ENCODE measurements at regions of chr1 and their contacts with region 1.

Region 1: GRCh38 chr1:8423650-8424538 is 106.0 kb downstream of the SLC45A1 start:
- DNase-seq: peak in 8 of 9 experiments; percentile 32 to 74 (median 57)
- ATAC-seq: peak; percentile 56
- H3K4me3 ChIP-seq: peak overlapping the region; percentile 62 to 75
- H3K4me3 Mint-ChIP-seq: peak overlapping the region; percentile 92
- H3K27ac ChIP-seq: peak overlapping the region; percentile 49 to 61
- H3K27ac Mint-ChIP-seq: peak overlapping the region; percentile 97
- H3K4me1 ChIP-seq: peaks cover 79% of the 10 kb centered on the region
- H3K4me1 Mint-ChIP-seq: peaks cover 44% of the 10 kb centered on the region
- H3K27me3 ChIP-seq: no peaks in the 10 kb centered on the region
- H3K27me3 Mint-ChIP-seq: no peaks in the 10 kb centered on the region
- CTCF ChIP-seq: no peak

Region 2: GRCh38 chr1:8238851-8239305 is 185.0 kb before region 1 on chr1:
- CTCF ChIA-PET with region 1: no interaction called
- POLR2A ChIA-PET with region 1: no interaction called
- intact Hi-C with region 1: no loop called
- DNase-seq: no peak
- ATAC-seq: no peak
- H3K4me3 ChIP-seq: no peak overlapping the region
- H3K4me3 Mint-ChIP-seq: no peak overlapping the region
- H3K27ac ChIP-seq: no peak overlapping the region
- H3K27ac Mint-ChIP-seq: no peak overlapping the region
- H3K4me1 ChIP-seq: peaks cover 3% of the 10 kb centered on the region
- H3K4me1 Mint-ChIP-seq: peaks cover 4% of the 10 kb centered on the region
- H3K27me3 ChIP-seq: no peaks in the 10 kb centered on the region
- H3K27me3 Mint-ChIP-seq: peaks cover 17% of the 10 kb centered on the region
- CTCF ChIP-seq: no peak

Region 3: GRCh38 chr1:8334106-8334851 is 89.6 kb before region 1 on chr1:
- CTCF ChIA-PET with region 1: no interaction called
- POLR2A ChIA-PET with region 1: no interaction called
- intact Hi-C with region 1: no loop called
- DNase-seq: no peak
- ATAC-seq: no peak
- H3K4me3 ChIP-seq: no peak overlapping the region
- H3K4me3 Mint-ChIP-seq: no peak overlapping the region
- H3K27ac ChIP-seq: no peak overlapping the region
- H3K27ac Mint-ChIP-seq: no peak overlapping the region
- H3K4me1 ChIP-seq: no peaks in the 10 kb centered on the region
- H3K4me1 Mint-ChIP-seq: no peaks in the 10 kb centered on the region
- H3K27me3 ChIP-seq: no peaks in the 10 kb centered on the region
- H3K27me3 Mint-ChIP-seq: no peaks in the 10 kb centered on the region
- CTCF ChIP-seq: no peak

Region 4: DNA sequence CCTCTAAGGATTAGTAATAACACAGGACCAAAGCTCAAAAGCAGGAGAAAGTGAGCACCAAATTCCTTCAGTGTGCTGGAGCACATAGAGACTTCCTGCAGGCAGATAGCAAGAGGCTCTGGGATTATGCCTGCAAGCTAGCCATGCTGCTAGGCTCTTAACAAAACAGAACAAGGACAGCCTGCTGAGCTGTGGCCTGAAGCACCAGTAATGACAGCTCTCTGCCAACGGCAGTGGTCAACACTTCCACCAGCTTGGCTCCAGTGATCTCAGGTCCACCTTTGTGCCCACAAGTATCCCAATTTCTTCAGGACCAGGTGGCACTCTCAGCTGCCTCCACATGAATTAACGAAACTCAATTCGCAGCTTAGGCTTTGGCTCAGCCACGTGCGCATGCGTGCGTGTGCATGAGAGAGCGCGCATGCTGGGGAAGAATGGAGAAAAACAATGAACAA is 41.8 kb before region 1 on chr1:
- CTCF ChIA-PET with region 1: no interaction called
- POLR2A ChIA-PET with region 1: interaction called, 4 read pairs
- intact Hi-C with region 1: loop called in 1 of 2 experiments (anchors 5 kb)
- DNase-seq: no peak
- ATAC-seq: no peak
- H3K4me3 ChIP-seq: no peak overlapping the region
- H3K4me3 Mint-ChIP-seq: no peak overlapping the region
- H3K27ac ChIP-seq: no peak overlapping the region
- H3K27ac Mint-ChIP-seq: peak overlapping the region; percentile 90
- H3K4me1 ChIP-seq: peaks cover 38% of the 10 kb centered on the region
- H3K4me1 Mint-ChIP-seq: peaks cover 85% of the 10 kb centered on the region
- H3K27me3 ChIP-seq: no peaks in the 10 kb centered on the region
- H3K27me3 Mint-ChIP-seq: no peaks in the 10 kb centered on the region
- CTCF ChIP-seq: no peak

Region 5: GRCh38 chr1:8477166-8477982 is 53.5 kb after region 1 on chr1:
- CTCF ChIA-PET with region 1: no interaction called
- POLR2A ChIA-PET with region 1: interaction called, 3 read pairs
- intact Hi-C with region 1: loop called (anchors 5 kb)
- DNase-seq: no peak
- ATAC-seq: no peak
- H3K4me3 ChIP-seq: no peak overlapping the region
- H3K4me3 Mint-ChIP-seq: no peak overlapping the region
- H3K27ac ChIP-seq: no peak overlapping the region
- H3K27ac Mint-ChIP-seq: no peak overlapping the region
- H3K4me1 ChIP-seq: peaks cover 11% of the 10 kb centered on the region
- H3K4me1 Mint-ChIP-seq: peaks cover 27% of the 10 kb centered on the region
- H3K27me3 ChIP-seq: no peaks in the 10 kb centered on the region
- H3K27me3 Mint-ChIP-seq: no peaks in the 10 kb centered on the region
- CTCF ChIP-seq: no peak

Region 6: GRCh38 chr1:8702850-8703810 is 279.2 kb after region 1 on chr1:
- CTCF ChIA-PET with region 1: interaction called, 3 read pairs
- POLR2A ChIA-PET with region 1: no interaction called
- intact Hi-C with region 1: loop called (anchors 5 to 10 kb)
- DNase-seq: peak; percentile 19 to 73 (median 43)
- ATAC-seq: no peak
- H3K4me3 ChIP-seq: peak overlapping the region; percentile 18 to 21
- H3K4me3 Mint-ChIP-seq: peak overlapping the region; percentile 86
- H3K27ac ChIP-seq: no peak overlapping the region
- H3K27ac Mint-ChIP-seq: no peak overlapping the region
- H3K4me1 ChIP-seq: peaks cover 32% of the 10 kb centered on the region
- H3K4me1 Mint-ChIP-seq: peaks cover 29% of the 10 kb centered on the region
- H3K27me3 ChIP-seq: peaks cover 6 to 20% of the 10 kb centered on the region in 2 experiments
- H3K27me3 Mint-ChIP-seq: peaks cover 52% of the 10 kb centered on the region
- CTCF ChIP-seq: no peak

Measured in CD8-positive, alpha-beta T cell (primary cell).